Naive thymus-derived CD4-positive, alpha-beta T cell (primary cell): ENCODE measurements at regions of chr10 and their contacts with region 1.

Region 1: GRCh38 chr10:89414146-89414878 is at the start of gene IFIT5:
- DNase-seq: peak; percentile 62 to 83 (median 76)
- ATAC-seq: peak; percentile 88
- H3K4me3 ChIP-seq: peak within 1 kb of the TSS; percentile 77
- H3K4me3 Mint-ChIP-seq: peak within 1 kb of the TSS; percentile 90 to 100 (median 96)
- H3K27ac ChIP-seq: peak within 1 kb of the TSS; percentile 94
- H3K27ac Mint-ChIP-seq: peak within 1 kb of the TSS; percentile 96 to 100 (median 98)
- H3K4me1 ChIP-seq: peaks cover 21% of the 10 kb centered on the region in 2 donors
- H3K4me1 Mint-ChIP-seq: peaks cover 26 to 75% (median 65%) of the 10 kb centered on the region in 7 donors
- H3K27me3 ChIP-seq: no peaks in the 10 kb centered on the region
- H3K27me3 Mint-ChIP-seq: no peaks in the 10 kb centered on the region
- total RNA-seq, gene IFIT5: 13.1 to 34.0 (median 24.8) TPM

Region 2: GRCh38 chr10:88820748-88821389 is 593.4 kb before region 1 on chr10:
- CTCF ChIA-PET with region 1: no interaction called
- POLR2A ChIA-PET with region 1: no interaction called
- intact Hi-C with region 1: loop called in 1 of 2 experiments (anchors 1 kb)
- DNase-seq: peak in 1 of 9 donors; percentile 13
- ATAC-seq: no peak
- H3K4me3 ChIP-seq: no peak overlapping the region
- H3K4me3 Mint-ChIP-seq: peak overlapping the region in 2 of 10 donors; percentile 13 to 16
- H3K27ac ChIP-seq: no peak overlapping the region
- H3K27ac Mint-ChIP-seq: peak overlapping the region in 4 of 9 donors; percentile 19 to 86 (median 44)
- H3K4me1 ChIP-seq: peaks cover 24 to 34% of the 10 kb centered on the region in 2 donors
- H3K4me1 Mint-ChIP-seq: peaks cover 20 to 66% (median 51%) of the 10 kb centered on the region in 7 donors
- H3K27me3 ChIP-seq: no peaks in the 10 kb centered on the region
- H3K27me3 Mint-ChIP-seq: peaks cover 0 to 4% (median 0%) of the 10 kb centered on the region in 5 donors

Region 3: GRCh38 chr10:88990384-88991160 is 423.7 kb before region 1 on chr10 and contains the start of gene FAS:
- CTCF ChIA-PET with region 1: no interaction called
- POLR2A ChIA-PET with region 1: no interaction called
- intact Hi-C with region 1: loop called in 1 of 2 experiments (anchors 2 kb)
- DNase-seq: peak; percentile 50 to 81 (median 61)
- ATAC-seq: peak; percentile 86
- H3K4me3 ChIP-seq: peak within 1 kb of the TSS; percentile 86
- H3K4me3 Mint-ChIP-seq: peak within 1 kb of the TSS; percentile 92 to 100 (median 96)
- H3K27ac ChIP-seq: peak within 1 kb of the TSS; percentile 77
- H3K27ac Mint-ChIP-seq: peak within 1 kb of the TSS; percentile 91 to 96 (median 94)
- H3K4me1 ChIP-seq: peaks cover 42 to 45% of the 10 kb centered on the region in 2 donors
- H3K4me1 Mint-ChIP-seq: peaks cover 41 to 83% (median 68%) of the 10 kb centered on the region in 7 donors
- H3K27me3 ChIP-seq: no peaks in the 10 kb centered on the region
- H3K27me3 Mint-ChIP-seq: no peaks in the 10 kb centered on the region
- total RNA-seq, gene FAS: 5.6 to 67.4 (median 8.3) TPM

Region 4: GRCh38 chr10:89301721-89302445 is 112.4 kb before region 1 on chr10 and contains the start of gene IFIT2:
- CTCF ChIA-PET with region 1: no interaction called
- POLR2A ChIA-PET with region 1: interaction called, 46 read pairs
- intact Hi-C with region 1: loop called (anchors 1 to 2 kb)
- DNase-seq: peak in 7 of 9 donors; percentile 50 to 72 (median 60)
- ATAC-seq: peak; percentile 86
- H3K4me3 ChIP-seq: peak within 1 kb of the TSS; percentile 76
- H3K4me3 Mint-ChIP-seq: peak within 1 kb of the TSS; percentile 83 to 99 (median 94)
- H3K27ac ChIP-seq: peak within 1 kb of the TSS; percentile 71
- H3K27ac Mint-ChIP-seq: peak within 1 kb of the TSS; percentile 88 to 98 (median 97)
- H3K4me1 ChIP-seq: peaks cover 15 to 24% of the 10 kb centered on the region in 2 donors
- H3K4me1 Mint-ChIP-seq: peaks cover 24 to 60% (median 44%) of the 10 kb centered on the region in 7 donors
- H3K27me3 ChIP-seq: no peaks in the 10 kb centered on the region
- H3K27me3 Mint-ChIP-seq: peaks cover 0 to 25% (median 0%) of the 10 kb centered on the region in 5 donors
- total RNA-seq, gene IFIT2: 6.0 to 16.4 (median 8.4) TPM

Region 5: DNA sequence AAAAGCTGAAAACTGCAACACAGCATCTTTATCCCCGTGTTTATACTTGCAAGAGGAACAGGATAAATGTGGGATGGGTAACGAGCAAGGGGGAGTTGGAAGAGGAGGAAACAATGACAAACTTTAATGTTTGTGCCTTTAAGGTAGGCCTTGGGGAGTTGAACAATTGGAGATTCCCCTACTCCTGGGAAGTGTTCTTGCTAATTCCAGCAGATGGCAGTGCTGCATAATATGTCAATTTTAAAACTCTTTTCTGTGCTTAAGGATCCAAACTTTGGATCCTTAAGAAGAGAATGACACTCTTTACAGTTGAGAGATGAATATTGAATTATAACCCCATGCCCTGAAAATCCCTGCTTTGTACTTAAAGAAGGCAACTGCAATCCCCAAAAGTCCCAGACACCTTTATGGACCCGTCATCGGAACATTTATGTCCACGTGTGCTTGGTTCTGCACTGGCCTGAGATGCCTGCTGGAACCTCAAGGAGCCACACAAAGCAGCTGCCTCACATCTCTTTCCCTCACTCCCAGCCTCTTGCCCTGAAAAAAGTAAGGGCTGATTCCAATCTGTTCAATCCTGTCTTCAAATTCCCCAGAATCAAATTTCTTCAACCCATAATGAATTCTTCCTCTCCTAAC is 12.0 kb after region 1 on chr10:
- CTCF ChIA-PET with region 1: interaction called, 3 read pairs
- POLR2A ChIA-PET with region 1: no interaction called
- intact Hi-C with region 1: loop called in 1 of 2 experiments (anchors 1 kb)
- DNase-seq: peak in 4 of 9 donors; percentile 23 to 38 (median 28)
- ATAC-seq: peak; percentile 81
- H3K4me3 ChIP-seq: no peak overlapping the region
- H3K4me3 Mint-ChIP-seq: no peak overlapping the region
- H3K27ac ChIP-seq: no peak overlapping the region
- H3K27ac Mint-ChIP-seq: no peak overlapping the region
- H3K4me1 ChIP-seq: no peaks in the 10 kb centered on the region
- H3K4me1 Mint-ChIP-seq: peaks cover under 1 to 8% (median 3%) of the 10 kb centered on the region in 7 donors
- H3K27me3 ChIP-seq: no peaks in the 10 kb centered on the region
- H3K27me3 Mint-ChIP-seq: peaks cover 0 to 16% (median 4%) of the 10 kb centered on the region in 5 donors

Region 6: GRCh38 chr10:89440245-89441009 is 26.1 kb after region 1 on chr10:
- CTCF ChIA-PET with region 1: no interaction called
- POLR2A ChIA-PET with region 1: no interaction called
- intact Hi-C with region 1: no loop called
- DNase-seq: no peak
- ATAC-seq: no peak
- H3K4me3 ChIP-seq: no peak overlapping the region
- H3K4me3 Mint-ChIP-seq: no peak overlapping the region
- H3K27ac ChIP-seq: no peak overlapping the region
- H3K27ac Mint-ChIP-seq: no peak overlapping the region
- H3K4me1 ChIP-seq: no peaks in the 10 kb centered on the region
- H3K4me1 Mint-ChIP-seq: no peaks in the 10 kb centered on the region
- H3K27me3 ChIP-seq: no peaks in the 10 kb centered on the region
- H3K27me3 Mint-ChIP-seq: peaks cover 18 to 42% (median 25%) of the 10 kb centered on the region in 5 donors

Region 7: GRCh38 chr10:89888321-89889070 is 474.2 kb after region 1 on chr10:
- CTCF ChIA-PET with region 1: no interaction called
- POLR2A ChIA-PET with region 1: no interaction called
- intact Hi-C with region 1: no loop called
- DNase-seq: no peak
- ATAC-seq: peak; percentile 50
- H3K4me3 ChIP-seq: no peak overlapping the region
- H3K4me3 Mint-ChIP-seq: no peak overlapping the region
- H3K27ac ChIP-seq: no peak overlapping the region
- H3K27ac Mint-ChIP-seq: no peak overlapping the region
- H3K4me1 ChIP-seq: no peaks in the 10 kb centered on the region
- H3K4me1 Mint-ChIP-seq: peaks cover 0 to 2% (median 0%) of the 10 kb centered on the region in 7 donors
- H3K27me3 ChIP-seq: no peaks in the 10 kb centered on the region
- H3K27me3 Mint-ChIP-seq: peaks cover 19 to 32% (median 24%) of the 10 kb centered on the region in 5 donors

Region 8: DNA sequence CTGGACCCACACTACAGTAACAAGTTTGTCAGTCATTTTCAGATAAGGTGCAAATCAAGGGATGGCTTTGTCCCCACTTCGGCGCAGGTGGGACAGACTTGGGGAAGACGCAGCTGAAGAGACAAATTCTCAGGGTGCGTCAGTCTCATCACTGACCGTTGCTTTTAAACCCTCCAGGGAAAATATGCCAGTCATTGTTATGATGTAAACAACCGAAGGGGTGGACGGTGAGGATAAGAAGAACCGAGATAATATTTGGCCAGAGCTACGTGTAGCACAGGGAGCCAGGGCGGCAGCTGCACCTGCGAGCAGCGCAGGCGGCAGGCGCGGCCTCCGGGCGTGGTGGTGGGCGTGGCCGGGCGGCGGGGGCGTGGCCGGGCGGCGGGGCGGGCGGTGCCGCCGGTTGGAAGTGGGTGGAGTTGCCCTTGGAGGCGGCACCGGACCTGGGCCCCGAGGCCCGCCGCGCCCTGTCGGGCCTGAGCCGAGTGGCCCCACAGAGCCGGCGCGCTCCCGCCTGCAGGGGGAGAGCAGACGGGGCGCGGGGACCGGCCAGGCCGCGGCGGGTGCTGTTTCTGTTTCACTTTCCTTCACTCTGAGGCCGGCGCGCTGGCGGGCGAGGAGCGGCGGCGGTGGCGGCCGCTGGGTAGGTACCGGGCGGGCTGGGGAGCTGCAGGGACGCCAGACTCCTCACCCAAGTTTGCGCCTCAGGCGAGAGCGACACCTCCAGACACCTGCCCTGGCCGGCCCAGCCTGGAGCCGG is 1806.1 kb after region 1 on chr10 and contains the start of gene PCGF5:
- CTCF ChIA-PET with region 1: no interaction called
- POLR2A ChIA-PET with region 1: no interaction called
- intact Hi-C with region 1: loop called in 1 of 2 experiments (anchors 10 kb)
- DNase-seq: peak; percentile 82 to 98 (median 90)
- ATAC-seq: peak; percentile 98
- H3K4me3 ChIP-seq: peak within 1 kb of the TSS; percentile 68
- H3K4me3 Mint-ChIP-seq: peak within 1 kb of the TSS; percentile 84 to 96 (median 90)
- H3K27ac ChIP-seq: peak within 1 kb of the TSS; percentile 90
- H3K27ac Mint-ChIP-seq: peak within 1 kb of the TSS; percentile 76 to 95 (median 89)
- H3K4me1 ChIP-seq: peaks cover 28 to 34% of the 10 kb centered on the region in 2 donors
- H3K4me1 Mint-ChIP-seq: peaks cover 33 to 69% (median 55%) of the 10 kb centered on the region in 7 donors
- H3K27me3 ChIP-seq: no peaks in the 10 kb centered on the region
- H3K27me3 Mint-ChIP-seq: no peaks in the 10 kb centered on the region
- total RNA-seq, gene PCGF5: 41.2 to 62.3 (median 57.4) TPM